ENCODE measurements at regions of chr13 and their contacts with region 1.

Region 1: DNA sequence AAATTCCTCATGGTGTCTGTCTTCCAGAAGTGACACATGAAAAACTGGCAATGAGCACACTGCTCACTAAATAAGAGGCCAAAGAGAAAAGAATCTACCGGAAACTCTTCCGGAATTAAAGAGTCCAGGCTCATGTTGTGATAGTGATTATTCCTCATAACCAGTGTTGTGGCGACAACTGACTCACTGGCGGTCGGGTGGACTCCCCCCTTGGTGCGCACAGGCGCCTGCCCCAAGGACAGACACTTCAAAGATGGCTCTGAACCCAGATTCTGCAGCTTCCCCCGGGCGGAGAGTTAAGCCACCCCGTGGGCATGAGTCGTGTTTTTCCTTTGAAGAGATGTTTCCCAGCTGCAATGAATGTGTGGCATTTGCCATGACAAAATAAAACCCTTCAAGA is 10.3 kb downstream of the IL17D start:
- DNase-seq: peak in 1 of 2 donors; percentile 70
- H3K4me3 ChIP-seq: no peak overlapping the region
- H3K27ac ChIP-seq: peak overlapping the region; percentile 68 to 72
- H3K4me1 ChIP-seq: peaks cover 0 to 46% (median 28%) of the 10 kb centered on the region in 4 donors
- H3K27me3 ChIP-seq: no peaks in the 10 kb centered on the region
- CTCF ChIP-seq: no peak

Region 2: GRCh38 chr13:20828539-20829364 is 115.0 kb after region 1 on chr13:
- intact Hi-C with region 1: loop called (anchors 5 kb)
- DNase-seq: no peak
- H3K4me3 ChIP-seq: peak overlapping the region; percentile 11 to 28
- H3K27ac ChIP-seq: peak overlapping the region; percentile 5 to 29
- H3K4me1 ChIP-seq: peaks cover 0 to 31% (median 2%) of the 10 kb centered on the region in 4 donors
- H3K27me3 ChIP-seq: no peaks in the 10 kb centered on the region
- CTCF ChIP-seq: peak; percentile 73 to 83

Region 3: GRCh38 chr13:21075011-21075898 is 361.5 kb after region 1 on chr13:
- intact Hi-C with region 1: no loop called
- DNase-seq: peak in 1 of 2 donors; percentile 69
- H3K4me3 ChIP-seq: peak overlapping the region; percentile 54 to 57
- H3K27ac ChIP-seq: peak overlapping the region; percentile 65 to 67
- H3K4me1 ChIP-seq: peaks cover 0 to 36% (median 17%) of the 10 kb centered on the region in 4 donors
- H3K27me3 ChIP-seq: no peaks in the 10 kb centered on the region
- CTCF ChIP-seq: no peak